ENCODE measurements at regions of chr7 and their contacts with region 1.

Region 1: GRCh38 chr7:74449809-74450397 is 3.8 kb upstream of the GTF2IRD1 start:
- DNase-seq: peak; percentile 88
- ATAC-seq: peak; percentile 86
- H3K4me3 Mint-ChIP-seq: no peak overlapping the region
- H3K27ac Mint-ChIP-seq: no peak overlapping the region
- H3K4me1 Mint-ChIP-seq: peaks cover 7% of the 10 kb centered on the region
- H3K27me3 Mint-ChIP-seq: no peaks in the 10 kb centered on the region
- CTCF ChIP-seq: peak; percentile 85

Region 2: DNA sequence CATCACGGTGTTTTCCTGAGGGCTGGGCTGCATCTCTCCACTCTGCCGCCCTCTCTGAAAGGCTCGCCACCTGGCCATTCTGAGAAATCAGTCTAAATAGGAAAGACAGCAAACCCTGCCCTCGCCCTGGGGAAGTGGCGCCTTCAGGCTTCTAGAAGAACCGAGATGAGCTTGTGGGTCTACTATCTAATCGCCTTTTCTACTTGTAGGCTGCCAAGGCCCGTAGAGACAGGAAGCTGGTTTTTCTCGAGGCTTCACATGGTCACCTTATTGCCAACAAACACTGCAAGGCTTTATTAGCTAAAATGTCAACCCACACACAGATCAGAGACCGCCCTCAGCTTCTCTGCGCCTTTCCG is 218.7 kb before region 1 on chr7:
- CTCF ChIA-PET with region 1: no interaction called
- POLR2A ChIA-PET with region 1: no interaction called
- DNase-seq: no peak
- ATAC-seq: no peak
- H3K4me3 Mint-ChIP-seq: no peak overlapping the region
- H3K27ac Mint-ChIP-seq: no peak overlapping the region
- H3K4me1 Mint-ChIP-seq: no peaks in the 10 kb centered on the region
- H3K27me3 Mint-ChIP-seq: no peaks in the 10 kb centered on the region
- CTCF ChIP-seq: no peak

Region 3: DNA sequence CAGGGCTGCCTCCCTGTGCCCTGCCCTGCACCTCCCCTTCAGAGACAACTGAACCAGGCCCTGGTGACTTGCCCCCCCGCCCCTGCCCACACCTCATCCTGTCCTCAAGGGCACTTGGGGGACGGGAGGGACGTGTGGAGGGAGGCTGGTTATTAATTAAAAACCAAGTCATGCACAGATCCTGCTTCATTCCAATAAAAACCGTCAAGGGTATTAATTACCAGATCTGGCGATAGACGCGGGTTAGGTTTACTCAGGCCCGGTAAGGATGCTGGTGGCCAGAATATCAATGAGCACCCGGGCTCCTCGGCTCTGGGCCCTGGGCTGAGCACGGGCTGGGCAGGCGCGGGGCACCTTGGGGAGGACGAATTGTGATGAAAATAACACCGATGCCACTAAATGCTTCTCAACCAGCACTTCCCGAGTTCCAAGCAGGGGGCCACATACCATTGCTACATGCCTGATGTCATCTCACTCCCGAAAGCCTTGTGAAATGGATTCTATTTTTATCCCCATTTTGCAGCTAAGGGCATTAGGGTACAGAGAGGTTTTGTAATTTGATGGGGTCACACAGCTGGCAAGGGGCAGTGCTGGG is 20.7 kb before region 1 on chr7:
- CTCF ChIA-PET with region 1: interaction called, 12 read pairs
- POLR2A ChIA-PET with region 1: no interaction called
- DNase-seq: peak; percentile 54
- ATAC-seq: peak; percentile 85
- H3K4me3 Mint-ChIP-seq: peak overlapping the region; percentile 36
- H3K27ac Mint-ChIP-seq: no peak overlapping the region; the same call in 1 of the 2 replicates
- H3K4me1 Mint-ChIP-seq: peaks cover 23% of the 10 kb centered on the region
- H3K27me3 Mint-ChIP-seq: no peaks in the 10 kb centered on the region
- CTCF ChIP-seq: no peak

Measured in WTC11 (cell line).